Heart left ventricle (tissue), 16 donors: ENCODE measurements at regions of chr22 and their contacts with region 1.

Region 1: DNA sequence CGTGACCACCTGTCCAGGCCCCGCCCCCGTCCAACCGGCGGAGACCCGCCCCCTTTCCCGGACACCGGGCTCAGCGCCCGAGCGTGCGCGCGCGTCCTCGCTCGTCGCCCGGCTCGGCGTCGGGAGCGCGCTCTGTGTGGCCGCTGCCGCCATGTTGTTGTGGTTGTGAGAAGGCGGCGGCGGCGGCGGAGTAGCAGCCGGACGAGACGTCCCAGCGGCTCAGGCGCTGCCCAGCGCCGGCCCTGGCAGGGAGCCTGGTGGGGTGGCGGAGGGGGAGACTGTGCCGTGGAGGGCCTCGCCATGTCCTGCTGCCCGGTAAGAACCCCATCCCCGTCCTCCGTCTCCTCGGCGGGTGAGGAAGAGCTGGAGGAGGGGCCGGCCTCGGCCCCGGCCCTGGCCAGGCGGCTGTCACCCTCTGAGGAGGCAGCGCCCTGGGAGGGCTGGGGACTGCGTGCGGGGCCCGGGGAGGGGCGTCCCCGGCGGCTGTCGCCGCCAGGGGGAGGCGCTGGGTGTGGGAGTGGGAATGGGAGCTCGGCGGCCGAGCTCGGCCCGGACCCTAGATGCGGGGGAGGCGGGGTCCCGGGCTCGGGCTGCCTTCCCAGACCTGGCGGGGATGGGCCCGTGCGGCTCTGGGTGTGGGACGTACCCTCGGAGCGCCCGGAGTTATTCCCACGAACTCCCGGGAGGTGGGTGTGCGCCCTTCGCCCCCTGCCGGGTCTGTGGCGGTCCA is at the start of gene MTMR3:
- DNase-seq: peak; percentile 94 to 97 (median 95)
- ATAC-seq: peak; percentile 79 to 95 (median 90)
- H3K4me3 ChIP-seq: peak within 1 kb of the TSS; percentile 45 to 98 (median 85)
- H3K27ac ChIP-seq: peak within 1 kb of the TSS; percentile 87 to 98 (median 96)
- H3K4me1 ChIP-seq: peaks cover 6 to 52% (median 36%) of the 10 kb centered on the region in 12 donors
- H3K27me3 ChIP-seq: no peaks in the 10 kb centered on the region
- CTCF ChIP-seq: peak in 11 of 12 donors; percentile 18 to 74 (median 50)
- POLR2A ChIP-seq: peak in 1 of 2 donors; percentile 64
- total RNA-seq, gene MTMR3: 26.1 to 44.8 (median 36.7) TPM

Region 2: GRCh38 chr22:29766632-29767170 is 116.5 kb before region 1 on chr22 and contains the start of gene ZMAT5:
- intact Hi-C with region 1: loop called in 2 of 10 experiments (anchors 10 kb)
- DNase-seq: peak; percentile 94 to 97 (median 96)
- ATAC-seq: peak; percentile 97 to 99 (median 98)
- H3K4me3 ChIP-seq: peak within 1 kb of the TSS; percentile 70 to 98 (median 80)
- H3K27ac ChIP-seq: peak within 1 kb of the TSS; percentile 87 to 96 (median 91)
- H3K4me1 ChIP-seq: peaks cover 6 to 42% (median 29%) of the 10 kb centered on the region in 12 donors
- H3K27me3 ChIP-seq: no peaks in the 10 kb centered on the region
- CTCF ChIP-seq: no peak
- POLR2A ChIP-seq: peak in 1 of 2 donors; percentile 55
- total RNA-seq, gene ZMAT5: 19.4 to 28.9 (median 20.9) TPM

Region 3: GRCh38 chr22:29772170-29772641 is 111.0 kb before region 1 on chr22:
- intact Hi-C with region 1: loop called in 2 of 10 experiments (anchors 10 kb)
- DNase-seq: peak in 2 of 5 donors; percentile 38 to 47
- ATAC-seq: peak in 3 of 4 donors; percentile 20 to 39 (median 34)
- H3K4me3 ChIP-seq: no peak overlapping the region
- H3K27ac ChIP-seq: peak overlapping the region in 1 of 12 donors; percentile 18
- H3K4me1 ChIP-seq: peaks cover 6 to 38% (median 19%) of the 10 kb centered on the region in 12 donors
- H3K27me3 ChIP-seq: no peaks in the 10 kb centered on the region
- CTCF ChIP-seq: peak in 7 of 12 donors; percentile 23 to 44 (median 24)
- POLR2A ChIP-seq: no peak

Region 4: DNA sequence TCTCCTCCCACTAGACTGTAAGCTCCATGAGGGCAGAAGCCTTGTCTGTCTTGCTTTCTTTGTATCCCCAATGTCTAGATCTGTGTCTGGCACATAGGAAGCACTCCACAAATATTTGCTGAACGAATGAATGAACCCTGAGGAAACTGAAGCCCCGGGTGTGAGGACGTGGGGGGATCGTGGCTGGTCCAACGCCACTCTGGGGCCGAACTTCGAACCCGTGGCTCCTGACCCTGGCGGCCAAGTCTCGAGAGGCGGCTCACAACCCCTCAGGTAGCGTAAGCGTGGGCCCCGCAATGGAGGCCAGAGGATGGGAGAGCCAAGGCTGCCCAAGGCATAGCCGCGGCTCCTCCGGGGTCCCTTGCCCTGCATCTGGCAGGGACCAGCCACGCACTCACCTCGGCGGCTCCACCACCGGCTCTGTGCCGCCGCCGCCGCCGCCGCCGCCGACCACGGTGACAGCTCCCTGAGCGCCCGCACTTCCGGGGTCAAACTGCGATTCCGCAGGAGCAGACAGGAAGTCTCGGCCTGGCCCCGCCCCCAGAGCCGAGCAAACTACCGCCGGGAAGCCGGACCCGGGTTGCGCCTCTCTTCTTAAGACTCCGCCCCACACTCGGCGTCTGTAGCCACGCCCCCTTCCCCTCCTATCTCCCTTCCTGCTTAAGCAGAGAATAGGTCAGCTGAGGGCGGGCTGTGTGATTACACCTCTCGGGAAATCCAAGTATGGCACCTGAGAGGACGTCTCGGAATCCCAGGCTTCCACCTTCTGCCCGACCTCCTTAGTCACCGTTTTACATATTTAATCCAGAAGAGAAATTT is 45.2 kb before region 1 on chr22 and contains the start of gene ASCC2:
- intact Hi-C with region 1: loop called in 6 of 10 experiments (anchors 1 to 10 kb)
- DNase-seq: peak; percentile 99 to 100 (median 99)
- ATAC-seq: peak; percentile 98 to 100 (median 99)
- H3K4me3 ChIP-seq: peak within 1 kb of the TSS; percentile 70 to 98 (median 88)
- H3K27ac ChIP-seq: peak within 1 kb of the TSS; percentile 56 to 94 (median 80)
- H3K4me1 ChIP-seq: peaks cover 3 to 47% (median 23%) of the 10 kb centered on the region in 12 donors
- H3K27me3 ChIP-seq: no peaks in the 10 kb centered on the region
- CTCF ChIP-seq: peak in 2 of 12 donors; percentile 9 to 13
- POLR2A ChIP-seq: peak; percentile 16 to 89
- total RNA-seq, gene ASCC2: 23.6 to 53.2 (median 30.4) TPM

Region 5: GRCh38 chr22:29947410-29948384 is 64.5 kb after region 1 on chr22:
- intact Hi-C with region 1: loop called in 2 of 10 experiments (anchors 10 kb)
- DNase-seq: no peak
- ATAC-seq: peak in 1 of 4 donors; percentile 44
- H3K4me3 ChIP-seq: no peak overlapping the region
- H3K27ac ChIP-seq: peak overlapping the region in 3 of 12 donors; percentile 5 to 25 (median 16)
- H3K4me1 ChIP-seq: peaks cover 0 to 74% (median 59%) of the 10 kb centered on the region in 12 donors
- H3K27me3 ChIP-seq: no peaks in the 10 kb centered on the region
- CTCF ChIP-seq: no peak
- POLR2A ChIP-seq: no peak

Region 6: GRCh38 chr22:29979777-29980321 is 96.6 kb after region 1 on chr22:
- intact Hi-C with region 1: loop called in 1 of 10 experiments (anchors 10 kb)
- DNase-seq: no peak
- ATAC-seq: peak in 1 of 4 donors; percentile 15
- H3K4me3 ChIP-seq: no peak overlapping the region
- H3K27ac ChIP-seq: no peak overlapping the region
- H3K4me1 ChIP-seq: peaks cover 0 to 20% (median 12%) of the 10 kb centered on the region in 12 donors
- H3K27me3 ChIP-seq: no peaks in the 10 kb centered on the region
- CTCF ChIP-seq: no peak
- POLR2A ChIP-seq: no peak

Region 7: GRCh38 chr22:29994027-29994715 is 111.0 kb after region 1 on chr22:
- intact Hi-C with region 1: loop called in 3 of 10 experiments (anchors 5 to 10 kb)
- DNase-seq: no peak
- ATAC-seq: no peak
- H3K4me3 ChIP-seq: no peak overlapping the region
- H3K27ac ChIP-seq: peak overlapping the region in 1 of 12 donors; percentile 50
- H3K4me1 ChIP-seq: peaks cover 0 to 33% (median 12%) of the 10 kb centered on the region in 12 donors
- H3K27me3 ChIP-seq: no peaks in the 10 kb centered on the region
- CTCF ChIP-seq: no peak
- POLR2A ChIP-seq: no peak

Region 8: DNA sequence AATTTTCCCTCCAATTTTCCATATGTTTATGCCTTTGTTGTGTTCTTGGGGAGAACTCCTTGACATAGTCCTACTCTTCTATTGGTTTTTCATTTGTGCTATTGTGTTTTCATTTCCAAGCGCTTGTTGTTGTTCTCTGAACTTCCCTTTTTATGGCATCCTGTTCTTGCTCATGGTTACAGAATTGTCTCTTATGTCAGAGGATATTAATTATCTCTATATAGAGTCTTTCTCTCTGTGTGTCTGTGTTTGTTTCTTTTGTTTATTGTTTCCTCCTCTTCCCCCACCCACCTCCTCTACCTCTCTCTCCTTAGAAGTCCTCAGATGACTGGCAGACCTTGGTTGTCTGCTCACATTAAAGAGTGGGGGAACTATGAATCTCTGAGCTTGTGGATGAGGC is 267.0 kb after region 1 on chr22:
- intact Hi-C with region 1: no loop called
- DNase-seq: no peak
- ATAC-seq: no peak
- H3K4me3 ChIP-seq: no peak overlapping the region
- H3K27ac ChIP-seq: no peak overlapping the region
- H3K4me1 ChIP-seq: no peaks in the 10 kb centered on the region
- H3K27me3 ChIP-seq: peaks cover 0 to 19% (median 7%) of the 10 kb centered on the region in 9 donors
- CTCF ChIP-seq: no peak
- POLR2A ChIP-seq: no peak

Region 9: GRCh38 chr22:30169002-30169401 is 285.8 kb after region 1 on chr22:
- intact Hi-C with region 1: no loop called
- DNase-seq: no peak
- ATAC-seq: no peak
- H3K4me3 ChIP-seq: no peak overlapping the region
- H3K27ac ChIP-seq: no peak overlapping the region
- H3K4me1 ChIP-seq: no peaks in the 10 kb centered on the region
- H3K27me3 ChIP-seq: peaks cover 0 to 66% (median 5%) of the 10 kb centered on the region in 9 donors
- CTCF ChIP-seq: no peak
- POLR2A ChIP-seq: no peak